Head of caudate nucleus (tissue), 42 donors: ENCODE measurements at regions of chr2 and their contacts with region 1.

Region 1: DNA sequence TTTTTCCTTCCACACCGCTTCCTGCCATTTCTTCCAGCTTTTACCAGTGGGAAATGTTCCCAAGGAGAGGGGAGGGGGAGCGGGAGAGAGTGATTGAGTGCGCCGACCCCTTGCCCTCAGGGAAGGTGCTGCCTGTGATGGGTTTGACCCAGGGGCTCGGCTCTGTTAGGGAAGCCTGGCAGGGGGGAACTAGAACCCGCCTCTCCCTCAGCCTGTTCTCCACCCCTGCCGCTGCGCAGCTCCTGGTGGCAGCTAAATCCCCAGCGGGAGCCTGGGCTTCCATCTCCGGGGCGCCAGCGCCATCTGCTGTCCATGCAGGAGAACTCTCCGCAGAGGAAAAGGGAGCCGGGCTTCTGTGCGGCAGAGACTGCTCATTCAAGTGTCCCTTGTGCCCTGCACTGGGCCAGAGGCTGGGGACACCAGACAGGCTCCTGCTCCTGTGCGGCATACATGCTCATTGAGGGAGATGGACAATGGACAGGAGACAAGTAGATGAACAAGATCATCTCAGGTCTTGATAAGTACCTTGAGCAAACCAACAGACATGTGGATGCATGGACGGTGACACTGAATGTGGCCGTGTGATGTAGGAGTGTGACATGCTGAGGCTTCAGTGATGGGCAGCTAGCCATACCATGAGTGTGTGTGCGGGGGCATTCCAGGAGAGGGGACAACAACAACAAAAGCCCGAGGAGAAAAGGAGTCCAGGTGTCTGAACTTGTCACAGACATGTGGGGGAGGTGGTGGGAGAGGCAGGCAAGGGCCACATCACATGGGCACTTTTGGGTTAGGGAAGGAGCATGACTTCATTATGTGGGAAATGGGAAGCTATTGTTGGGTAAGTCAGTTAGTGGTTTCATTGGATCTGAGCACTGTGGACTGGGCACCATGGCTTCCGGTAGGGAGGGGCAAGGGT is 13.3 kb downstream of the CHPF start:
- DNase-seq: peak; percentile 70 to 96 (median 90)

Region 2: DNA sequence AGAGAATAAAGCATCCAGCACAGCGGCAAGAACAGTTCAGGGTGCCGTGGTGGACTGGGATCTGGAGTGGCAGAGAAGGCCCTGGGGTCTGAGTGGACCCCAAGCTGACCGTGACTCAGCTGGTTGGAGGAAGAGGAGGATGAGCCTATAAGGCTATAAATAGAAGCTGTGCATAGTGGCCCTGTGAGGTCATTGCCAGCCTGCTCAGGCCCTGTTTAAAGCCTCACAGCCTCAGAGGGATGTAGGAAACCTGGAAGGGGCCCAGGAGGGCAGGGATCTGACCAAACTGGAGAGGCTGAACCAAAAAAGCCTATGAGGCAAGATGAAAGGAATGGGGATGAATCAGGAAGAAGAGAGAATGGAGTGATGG is 123.5 kb before region 1 on chr2:
- intact Hi-C with region 1: loop called (anchors 5 kb)
- DNase-seq: no peak

Region 3: DNA sequence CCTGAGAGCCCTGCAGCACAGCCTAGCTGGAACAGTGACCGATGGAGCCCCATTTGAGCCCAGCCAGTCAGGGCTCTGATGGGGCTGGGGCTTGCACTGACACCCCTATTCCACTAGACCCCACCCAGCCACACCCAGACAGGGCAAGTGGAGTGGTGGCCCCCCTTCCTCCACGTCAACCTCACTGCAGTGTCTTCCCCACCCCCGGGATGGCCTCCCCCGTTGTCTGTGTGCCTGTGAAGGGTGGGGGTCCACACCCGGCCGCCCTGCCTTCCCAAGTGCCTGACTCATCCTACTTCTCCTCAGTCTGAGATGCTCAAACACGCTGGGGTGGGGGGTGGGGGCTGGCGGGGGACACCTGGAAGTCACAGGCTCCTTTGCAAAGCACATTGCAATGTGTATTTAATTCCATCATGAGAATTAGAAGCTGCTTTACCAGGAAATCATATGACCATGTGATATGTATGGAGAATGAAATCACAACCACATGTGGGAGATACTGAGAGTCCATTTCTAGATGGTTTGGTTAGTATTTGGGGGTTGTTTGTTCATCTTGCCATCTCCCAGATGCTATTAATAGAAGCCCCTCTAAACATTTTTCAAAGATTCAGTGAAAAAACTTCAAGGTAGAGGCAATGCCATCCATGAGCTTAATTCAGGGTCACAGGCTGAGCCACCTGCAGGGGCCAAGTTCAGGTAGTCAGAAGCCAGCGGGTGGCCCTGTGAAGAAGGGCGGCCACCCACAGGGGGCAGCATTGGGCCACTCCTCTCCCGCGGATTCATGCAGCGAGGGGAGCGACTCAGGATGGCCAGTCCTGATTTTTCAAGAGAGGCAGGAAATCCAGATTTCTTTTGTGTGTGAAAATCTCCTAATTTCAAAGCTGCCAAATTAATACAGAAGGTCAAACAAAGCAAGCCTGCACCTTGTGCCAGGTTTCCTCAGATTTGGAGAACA is 54.3 kb before region 1 on chr2:
- intact Hi-C with region 1: loop called (anchors 5 kb)
- DNase-seq: peak in 41 of 42 donors; percentile 42 to 88 (median 67)